Caco-2 (cell line): ENCODE measurements at regions of chr11 and their contacts with region 1.

Region 1: DNA sequence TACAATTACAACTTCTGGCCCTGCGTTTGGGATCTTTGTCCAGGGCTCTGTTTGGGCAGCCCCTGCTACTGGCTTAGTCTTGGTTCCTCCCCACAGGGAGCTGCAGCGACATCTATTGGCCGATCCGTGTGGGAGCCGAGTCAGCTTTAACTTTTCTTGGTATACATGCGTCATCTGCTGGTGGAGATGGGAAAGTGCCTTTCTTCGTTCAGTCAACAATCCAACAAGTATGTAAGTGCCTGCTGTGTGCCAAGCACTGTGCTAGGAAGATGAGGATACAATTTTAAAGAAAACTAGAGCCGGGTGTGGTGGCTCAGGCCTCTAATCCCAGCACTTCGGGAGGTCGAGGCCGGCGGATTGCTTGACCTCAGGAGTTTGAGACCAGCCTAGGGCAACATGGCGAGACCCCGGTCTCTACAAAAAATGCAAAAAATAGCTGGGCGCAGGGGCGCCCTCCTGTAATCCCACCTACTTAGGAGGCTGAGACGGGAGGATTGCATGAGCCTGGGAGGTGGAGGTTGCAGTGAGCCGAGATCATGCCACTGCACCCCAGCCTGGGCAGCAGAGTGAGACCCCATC is 8.2 kb downstream of the TPBGL start:
- DNase-seq: peak; percentile 93 to 95
- H3K4me3 ChIP-seq: no peak overlapping the region
- H3K4me3 Mint-ChIP-seq: no peak overlapping the region
- H3K27ac Mint-ChIP-seq: no peak overlapping the region
- H3K4me1 ChIP-seq: no peaks in the 10 kb centered on the region
- H3K4me1 Mint-ChIP-seq: no peaks in the 10 kb centered on the region
- H3K27me3 ChIP-seq: no peaks in the 10 kb centered on the region
- H3K27me3 Mint-ChIP-seq: peaks cover 9% of the 10 kb centered on the region
- CTCF ChIP-seq: peak; percentile 100

Region 2: DNA sequence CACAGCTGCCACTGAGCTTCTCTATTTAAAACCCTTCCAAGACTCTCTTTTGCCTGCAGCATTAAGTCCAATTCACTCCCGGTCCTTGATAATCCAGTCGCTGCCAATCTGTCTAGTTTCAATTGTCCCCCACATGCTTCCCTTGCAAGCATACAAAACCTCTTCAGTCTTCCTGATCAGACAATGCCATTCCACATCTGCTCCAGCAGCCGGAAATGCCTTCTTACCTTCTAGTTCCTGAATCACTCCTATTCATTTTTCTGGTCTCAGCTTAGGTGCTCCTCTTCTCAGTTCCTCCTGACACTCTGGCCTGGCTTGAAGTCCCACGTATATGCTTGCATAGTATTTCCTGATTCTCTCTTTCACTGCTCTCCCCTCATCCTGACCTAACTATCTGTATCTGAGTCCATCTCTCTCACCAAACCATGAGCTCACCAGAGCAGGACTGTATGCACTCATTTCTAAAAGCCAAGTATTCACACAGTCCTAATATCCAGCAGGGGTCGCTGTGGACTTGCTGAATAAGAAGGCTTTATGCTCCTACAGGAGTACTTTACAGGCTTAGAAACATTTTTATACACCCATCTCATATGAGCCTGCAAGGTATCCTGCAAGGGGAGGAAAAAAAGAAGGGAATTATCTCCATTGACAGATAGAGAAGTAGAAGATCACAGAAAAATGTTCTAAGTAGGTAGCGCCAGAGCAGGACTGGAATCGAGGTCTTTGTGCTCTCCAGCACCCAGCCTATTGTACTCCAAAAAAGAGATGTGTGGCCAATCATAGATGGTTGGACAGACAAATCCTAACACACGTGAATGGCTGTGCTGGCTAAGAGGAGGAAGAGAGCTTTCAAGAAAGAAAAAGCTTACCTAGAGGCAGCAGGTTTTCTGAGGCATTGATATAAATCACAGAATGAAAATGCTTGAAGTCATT is 319.1 kb before region 1 on chr11:
- CTCF ChIA-PET with region 1: interaction called, 28 read pairs
- POLR2A ChIA-PET with region 1: no interaction called
- intact Hi-C with region 1: loop called (anchors 1 kb)
- DNase-seq: peak; percentile 84
- H3K4me3 ChIP-seq: no peak overlapping the region
- H3K4me3 Mint-ChIP-seq: no peak overlapping the region
- H3K27ac Mint-ChIP-seq: no peak overlapping the region
- H3K4me1 ChIP-seq: 0 out of 2 replicates have a peak, but pooled peaks cover 6% of the 10 kb centered on the region
- H3K4me1 Mint-ChIP-seq: no peaks in the 10 kb centered on the region
- H3K27me3 ChIP-seq: no peaks in the 10 kb centered on the region
- H3K27me3 Mint-ChIP-seq: no peaks in the 10 kb centered on the region
- CTCF ChIP-seq: peak; percentile 96

Region 3: DNA sequence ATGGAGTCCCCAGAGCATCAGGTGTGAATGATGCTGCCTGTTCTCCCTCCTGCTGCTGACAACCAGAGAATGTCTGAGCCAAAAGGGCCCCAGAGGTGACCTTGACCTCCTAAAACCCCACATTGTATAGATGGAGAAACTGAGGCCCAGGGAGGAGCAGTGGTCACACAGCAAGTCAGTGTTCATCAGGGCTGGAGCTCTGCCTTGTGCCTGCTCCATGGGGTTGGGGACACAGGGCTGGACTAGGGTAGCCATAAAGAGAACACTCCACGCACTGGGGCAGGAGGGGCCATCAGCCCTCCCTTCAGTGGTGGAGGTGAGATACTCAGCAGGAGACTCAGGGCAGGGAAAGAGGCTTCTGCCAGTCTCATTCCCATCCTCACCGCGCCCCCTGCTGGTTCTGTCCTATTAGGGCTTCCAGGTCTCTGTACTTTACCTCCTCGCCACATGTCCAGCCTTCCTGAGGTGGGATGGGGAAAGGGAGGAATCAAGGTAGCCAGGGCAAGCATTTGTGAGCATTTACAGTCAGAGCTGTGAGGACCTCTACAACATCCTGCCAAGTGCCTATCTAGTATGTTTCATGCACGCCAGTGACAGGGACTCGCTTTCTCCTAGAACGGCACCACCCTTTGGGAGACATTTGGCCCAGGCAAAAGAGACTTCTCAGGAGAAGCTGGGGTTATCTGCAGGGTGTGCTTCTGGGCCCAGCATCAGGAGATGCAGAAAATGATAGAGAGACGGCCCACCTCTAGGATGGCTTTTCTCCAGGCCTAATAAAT is 216.8 kb before region 1 on chr11:
- CTCF ChIA-PET with region 1: interaction called, 15 read pairs
- POLR2A ChIA-PET with region 1: no interaction called
- intact Hi-C with region 1: no loop called
- DNase-seq: peak; percentile 90 to 92
- H3K4me3 ChIP-seq: no peak overlapping the region
- H3K4me3 Mint-ChIP-seq: no peak overlapping the region
- H3K27ac Mint-ChIP-seq: no peak overlapping the region
- H3K4me1 ChIP-seq: no peaks in the 10 kb centered on the region
- H3K4me1 Mint-ChIP-seq: no peaks in the 10 kb centered on the region
- H3K27me3 ChIP-seq: no peaks in the 10 kb centered on the region
- H3K27me3 Mint-ChIP-seq: peaks cover 9% of the 10 kb centered on the region
- CTCF ChIP-seq: peak; percentile 97 to 98

Region 4: DNA sequence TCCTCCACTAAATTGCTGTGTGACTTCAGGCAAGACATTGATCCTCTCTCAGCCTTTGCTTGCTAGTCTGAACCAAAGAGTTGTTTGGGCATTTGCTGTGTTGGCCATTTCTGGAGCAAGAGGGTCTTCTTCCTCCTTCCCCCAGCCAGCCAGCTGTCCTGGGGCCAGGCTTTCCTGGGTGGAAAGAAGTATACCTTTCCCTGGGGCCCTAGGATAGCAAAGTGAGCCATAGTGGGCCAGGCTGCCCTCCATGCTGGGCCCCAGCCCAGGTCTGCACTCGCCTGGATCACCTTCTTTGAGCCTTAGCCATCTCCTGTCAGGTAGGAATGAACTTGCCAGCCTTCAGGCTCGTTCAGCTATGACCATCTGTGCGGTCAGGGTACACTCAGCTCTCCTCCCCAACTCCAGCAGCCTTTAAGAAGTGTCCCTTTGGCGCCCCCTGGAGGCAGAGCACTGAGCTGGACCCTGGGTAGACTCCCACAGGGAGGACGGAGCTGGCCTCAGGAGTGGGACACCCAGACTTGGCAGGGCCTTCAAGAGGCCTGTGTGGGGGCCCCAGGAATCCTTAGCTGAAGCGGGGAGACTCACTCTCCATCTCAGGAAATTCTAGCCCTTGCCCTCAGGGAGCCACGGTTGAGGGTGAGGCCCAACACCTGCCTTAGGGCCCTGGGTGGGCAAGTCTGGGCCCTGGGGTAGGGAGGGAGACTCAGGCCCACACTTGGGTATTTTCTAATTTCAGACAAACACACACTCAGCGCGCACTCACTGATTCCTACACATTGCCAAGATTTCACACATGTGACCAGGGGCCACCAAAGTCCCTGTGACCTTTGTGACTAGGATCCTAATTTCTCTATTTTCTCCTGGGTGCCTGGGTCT is 43.9 kb before region 1 on chr11:
- CTCF ChIA-PET with region 1: interaction called, 27 read pairs
- POLR2A ChIA-PET with region 1: no interaction called
- intact Hi-C with region 1: loop called (anchors 2 kb)
- DNase-seq: peak; percentile 95 to 97
- H3K4me3 ChIP-seq: no peak overlapping the region
- H3K4me3 Mint-ChIP-seq: no peak overlapping the region
- H3K27ac Mint-ChIP-seq: no peak overlapping the region
- H3K4me1 ChIP-seq: peaks cover 26% of the 10 kb centered on the region
- H3K4me1 Mint-ChIP-seq: peaks cover 16% of the 10 kb centered on the region
- H3K27me3 ChIP-seq: no peaks in the 10 kb centered on the region
- H3K27me3 Mint-ChIP-seq: no peaks in the 10 kb centered on the region
- CTCF ChIP-seq: peak; percentile 98 to 99

Region 5: GRCh38 chr11:75223954-75224643 is 24.7 kb before region 1 on chr11:
- CTCF ChIA-PET with region 1: interaction called, 12 read pairs
- POLR2A ChIA-PET with region 1: no interaction called
- intact Hi-C with region 1: no loop called
- DNase-seq: peak in 1 of 2 experiments; percentile 55
- H3K4me3 ChIP-seq: no peak overlapping the region
- H3K4me3 Mint-ChIP-seq: no peak overlapping the region
- H3K27ac Mint-ChIP-seq: no peak overlapping the region
- H3K4me1 ChIP-seq: no peaks in the 10 kb centered on the region
- H3K4me1 Mint-ChIP-seq: no peaks in the 10 kb centered on the region
- H3K27me3 ChIP-seq: no peaks in the 10 kb centered on the region
- H3K27me3 Mint-ChIP-seq: no peaks in the 10 kb centered on the region
- CTCF ChIP-seq: peak; percentile 30 to 54

Region 6: DNA sequence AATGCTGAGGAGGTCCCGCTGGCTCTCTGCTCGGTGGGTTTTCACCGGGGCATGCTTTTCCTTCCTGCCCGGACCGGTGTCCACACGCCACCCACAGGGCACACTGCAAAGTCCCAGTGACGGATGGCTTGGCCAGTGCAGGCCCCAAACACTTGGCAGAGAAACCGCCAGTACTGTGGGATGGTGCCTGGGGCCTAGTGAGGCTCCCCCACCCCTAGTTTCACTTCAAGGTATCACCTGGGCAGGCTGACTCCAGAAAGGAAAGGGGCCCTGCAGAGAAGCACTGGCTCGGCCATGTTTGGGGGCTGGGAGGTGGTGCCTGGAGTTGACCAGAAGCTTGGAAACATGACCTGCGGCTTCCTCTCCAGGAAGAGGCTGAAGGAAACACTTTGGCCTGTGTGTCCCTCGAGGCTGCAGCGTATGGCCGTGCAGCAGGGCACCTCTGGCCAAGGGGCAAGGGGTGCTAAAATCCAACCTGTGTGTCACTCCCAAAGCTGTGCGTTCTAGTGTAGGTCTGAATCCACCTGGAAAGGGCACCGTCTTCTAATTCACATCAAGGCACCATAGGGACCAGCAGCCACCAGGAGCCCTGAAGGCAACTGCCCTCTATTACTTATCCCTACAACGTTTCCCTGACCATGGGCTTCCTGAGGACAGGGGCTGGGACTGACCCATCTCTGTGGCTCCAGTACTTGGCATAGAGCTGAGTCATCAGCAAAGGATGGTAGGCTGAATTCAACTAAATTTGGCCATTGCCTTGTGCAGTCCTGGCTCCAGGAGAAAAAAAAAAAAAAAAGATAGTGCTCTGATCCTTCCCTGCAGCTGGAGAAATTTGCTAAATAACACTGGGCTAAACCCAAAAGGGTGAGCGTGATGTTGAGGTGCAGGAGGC is 14.4 kb after region 1 on chr11:
- CTCF ChIA-PET with region 1: interaction called, 16 read pairs
- POLR2A ChIA-PET with region 1: no interaction called
- intact Hi-C with region 1: no loop called
- DNase-seq: peak in 1 of 2 experiments; percentile 39
- H3K4me3 ChIP-seq: no peak overlapping the region
- H3K4me3 Mint-ChIP-seq: no peak overlapping the region
- H3K27ac Mint-ChIP-seq: peak overlapping the region; percentile 29
- H3K4me1 ChIP-seq: no peaks in the 10 kb centered on the region
- H3K4me1 Mint-ChIP-seq: peaks cover 9% of the 10 kb centered on the region
- H3K27me3 ChIP-seq: no peaks in the 10 kb centered on the region; the same call in 1 of the 2 replicates
- H3K27me3 Mint-ChIP-seq: peaks cover 4% of the 10 kb centered on the region
- CTCF ChIP-seq: no peak